ENCODE measurements at regions of chr17 and their contacts with region 1.

Region 1: GRCh38 chr17:17972126-17972951 is at the starts of genes DRC3 and TOM1L2:
- DNase-seq: peak; percentile 100
- ATAC-seq: peak; percentile 94
- H3K4me3 ChIP-seq: peak within 1 kb of the TSS; percentile 67 to 68
- H3K27ac ChIP-seq: peak within 1 kb of the TSS; percentile 62
- H3K4me1 ChIP-seq: peaks cover 11 to 23% of the 10 kb centered on the region in 2 experiments
- H3K27me3 ChIP-seq: no peaks in the 10 kb centered on the region
- CTCF ChIP-seq: no peak
- POLR2A ChIP-seq: no peak
- RAD21 ChIP-seq: no peak
- total RNA-seq, gene DRC3: 2.4 TPM
- total RNA-seq, gene TOM1L2: 24.1 TPM

Region 2: GRCh38 chr17:17890773-17891759 is 81.3 kb before region 1 on chr17:
- CTCF ChIA-PET with region 1: no interaction called
- POLR2A ChIA-PET with region 1: no interaction called
- RAD21 ChIA-PET with region 1: no interaction called
- intact Hi-C with region 1: loop called (anchors 5 kb)
- DNase-seq: peak; percentile 53
- ATAC-seq: peak; percentile 98
- H3K4me3 ChIP-seq: no peak overlapping the region
- H3K27ac ChIP-seq: no peak overlapping the region
- H3K4me1 ChIP-seq: 0 out of 4 replicates have a peak, but pooled peaks cover 0 to 4% of the 10 kb centered on the region in 2 experiments
- H3K27me3 ChIP-seq: no peaks in the 10 kb centered on the region
- CTCF ChIP-seq: peak; percentile 88 to 95 (median 89)
- POLR2A ChIP-seq: no peak
- RAD21 ChIP-seq: peak; percentile 98

Region 3: DNA sequence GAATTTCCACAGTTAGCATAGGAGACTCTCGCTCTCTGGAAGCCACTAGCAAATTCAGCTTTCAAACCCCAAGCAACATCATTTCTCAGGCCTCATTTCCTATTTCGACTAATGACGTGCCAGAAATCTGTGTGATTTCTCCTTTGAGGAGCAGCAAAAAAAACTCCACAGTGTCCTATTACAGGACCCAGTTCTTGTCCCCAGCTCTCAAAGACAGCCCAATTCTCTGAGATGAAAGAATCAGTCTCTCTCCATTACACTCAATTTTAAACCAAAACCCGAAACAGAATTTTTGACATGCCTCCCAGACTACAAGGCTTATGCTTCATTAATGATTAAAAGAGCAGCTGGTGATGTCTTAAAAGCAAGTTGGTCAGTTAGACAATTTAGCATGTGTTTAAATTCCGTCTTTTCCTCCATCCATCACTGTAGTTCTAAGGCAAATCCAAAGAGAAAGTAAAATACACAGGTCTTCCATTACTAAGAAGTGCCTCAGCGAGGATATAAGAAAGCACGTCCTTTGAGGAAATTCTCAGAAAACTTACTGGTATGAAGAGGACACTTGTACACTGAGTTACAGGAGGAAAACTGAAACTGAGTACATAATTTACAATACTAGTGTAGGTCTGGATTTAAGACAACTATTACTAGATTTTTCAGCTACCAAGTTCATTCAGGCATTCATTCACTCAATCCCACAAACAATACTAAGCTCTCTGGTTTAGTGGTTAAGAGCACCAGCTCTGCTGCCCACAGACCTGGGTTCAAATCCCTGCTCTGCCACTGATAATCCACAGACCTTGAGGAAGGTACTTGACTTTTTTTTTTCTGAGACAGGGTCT is 12.6 kb before region 1 on chr17:
- CTCF ChIA-PET with region 1: no interaction called
- POLR2A ChIA-PET with region 1: interaction called, 24 read pairs
- RAD21 ChIA-PET with region 1: no interaction called
- intact Hi-C with region 1: loop called (anchors 2 kb)
- DNase-seq: no peak
- ATAC-seq: no peak
- H3K4me3 ChIP-seq: no peak overlapping the region
- H3K27ac ChIP-seq: peak overlapping the region; percentile 88; the same call in 1 of the 2 replicates
- H3K4me1 ChIP-seq: peaks cover 36 to 48% of the 10 kb centered on the region in 2 experiments
- H3K27me3 ChIP-seq: no peaks in the 10 kb centered on the region
- CTCF ChIP-seq: no peak
- POLR2A ChIP-seq: no peak
- RAD21 ChIP-seq: no peak

Measured in HCT116 (cell line).